Mammary epithelial cell (primary cell): ENCODE measurements at regions of chr7 and their contacts with region 1.

Region 1: GRCh38 chr7:121961089-121961867 is 88.3 kb downstream of the PTPRZ1 start:
- DNase-seq: peak; percentile 93
- H3K4me3 ChIP-seq: no peak overlapping the region
- H3K27ac ChIP-seq: peak overlapping the region; percentile 99
- H3K4me1 ChIP-seq: peaks cover 10% of the 10 kb centered on the region
- H3K27me3 ChIP-seq: no peaks in the 10 kb centered on the region
- CTCF ChIP-seq: peak; percentile 25 to 47

Region 2: DNA sequence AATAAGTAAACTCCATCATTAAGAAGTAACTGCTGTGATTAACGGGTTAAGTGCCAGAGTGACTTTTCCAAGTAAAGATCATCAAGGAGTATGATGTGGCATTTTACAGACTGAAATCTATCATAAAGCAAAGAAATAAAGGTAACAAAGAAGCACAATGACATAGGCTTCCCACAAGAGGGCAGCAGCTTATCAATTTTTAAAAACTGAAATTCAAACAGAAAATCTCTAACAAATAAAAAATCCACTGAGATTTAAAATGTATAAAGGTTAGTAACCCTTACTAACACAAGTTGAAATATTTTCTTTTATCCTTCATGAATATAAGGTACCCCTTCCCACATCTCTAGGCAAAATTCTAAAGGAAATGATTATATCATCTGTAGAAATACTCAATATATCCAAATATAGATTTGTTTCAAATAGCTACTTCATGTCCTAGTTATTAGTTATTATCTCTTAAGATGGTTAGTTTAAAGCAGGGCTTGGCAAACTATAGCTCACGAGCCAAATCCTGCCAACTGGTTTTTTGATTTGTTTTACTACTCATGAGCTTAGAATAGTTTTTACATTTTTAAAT is 594.3 kb before region 1 on chr7:
- CTCF ChIA-PET with region 1: no interaction called
- dilution Hi-C with region 1: no loop called
- in situ Hi-C with region 1: no loop called
- intact Hi-C with region 1: loop called (anchors 1 kb)
- DNase-seq: no peak
- H3K4me3 ChIP-seq: no peak overlapping the region
- H3K27ac ChIP-seq: no peak overlapping the region
- H3K4me1 ChIP-seq: peaks cover 4% of the 10 kb centered on the region
- H3K27me3 ChIP-seq: no peaks in the 10 kb centered on the region
- CTCF ChIP-seq: peak; percentile 69

Region 3: DNA sequence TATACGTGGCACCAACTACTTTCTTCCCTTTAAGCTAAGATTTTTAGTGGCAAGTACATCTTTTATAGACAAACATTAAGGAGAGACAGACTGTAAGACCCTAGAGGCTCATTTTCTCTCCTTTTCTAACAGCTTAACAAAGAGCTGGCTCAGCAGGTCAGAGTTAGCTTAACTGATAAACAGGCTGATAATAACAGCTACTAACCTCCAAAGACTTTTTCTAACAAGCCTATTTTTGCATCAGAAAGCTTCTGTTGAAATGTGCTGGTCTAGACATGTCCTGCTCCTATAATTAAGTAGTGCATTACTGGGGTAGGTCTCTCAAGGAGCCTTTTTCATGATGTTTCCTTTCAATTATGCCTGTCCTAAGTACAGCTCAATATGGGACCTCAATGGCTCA is 326.9 kb before region 1 on chr7:
- CTCF ChIA-PET with region 1: no interaction called
- dilution Hi-C with region 1: no loop called
- in situ Hi-C with region 1: no loop called
- intact Hi-C with region 1: loop called (anchors 10 kb)
- DNase-seq: peak; percentile 4
- H3K4me3 ChIP-seq: no peak overlapping the region
- H3K27ac ChIP-seq: no peak overlapping the region
- H3K4me1 ChIP-seq: no peaks in the 10 kb centered on the region
- H3K27me3 ChIP-seq: no peaks in the 10 kb centered on the region
- CTCF ChIP-seq: no peak

Region 4: GRCh38 chr7:121752706-121753105 is 208.6 kb before region 1 on chr7:
- CTCF ChIA-PET with region 1: no interaction called
- dilution Hi-C with region 1: no loop called
- in situ Hi-C with region 1: no loop called
- intact Hi-C with region 1: loop called (anchors 1 kb)
- DNase-seq: no peak
- H3K4me3 ChIP-seq: no peak overlapping the region
- H3K27ac ChIP-seq: no peak overlapping the region
- H3K4me1 ChIP-seq: peaks cover 3% of the 10 kb centered on the region
- H3K27me3 ChIP-seq: no peaks in the 10 kb centered on the region
- CTCF ChIP-seq: peak in 1 of 2 donors; percentile 49

Region 5: GRCh38 chr7:121824276-121824675 is 137.0 kb before region 1 on chr7:
- CTCF ChIA-PET with region 1: no interaction called
- dilution Hi-C with region 1: no loop called
- in situ Hi-C with region 1: no loop called
- intact Hi-C with region 1: no loop called
- DNase-seq: peak; percentile 17
- H3K4me3 ChIP-seq: no peak overlapping the region
- H3K27ac ChIP-seq: no peak overlapping the region
- H3K4me1 ChIP-seq: no peaks in the 10 kb centered on the region
- H3K27me3 ChIP-seq: no peaks in the 10 kb centered on the region
- CTCF ChIP-seq: no peak

Region 6: DNA sequence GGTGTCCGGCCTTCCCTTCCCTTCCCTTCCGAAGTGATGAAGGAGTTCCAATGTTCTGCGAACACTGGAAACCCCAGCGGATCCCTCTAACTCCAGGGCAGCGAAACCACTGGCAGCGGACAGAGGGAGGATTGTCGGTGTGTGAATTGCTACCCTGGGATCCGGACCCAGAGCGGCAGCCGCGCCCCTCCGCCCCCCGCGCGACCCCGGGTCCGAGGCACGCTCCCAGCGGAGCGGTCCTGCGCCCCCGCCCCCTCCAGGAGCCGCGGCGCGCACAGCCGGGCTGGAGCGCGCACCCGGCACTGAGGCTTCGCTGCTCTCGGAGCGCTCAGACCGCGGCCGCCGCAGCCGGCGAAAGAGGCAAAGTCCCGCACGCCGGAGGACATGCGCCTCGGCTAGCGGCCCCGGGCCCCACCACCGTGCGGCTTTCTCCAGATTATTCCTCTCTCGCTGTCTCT is 88.4 kb before region 1 on chr7 and contains the start of gene PTPRZ1:
- CTCF ChIA-PET with region 1: no interaction called
- dilution Hi-C with region 1: no loop called
- in situ Hi-C with region 1: no loop called
- intact Hi-C with region 1: loop called (anchors 1 kb)
- DNase-seq: no peak
- H3K4me3 ChIP-seq: peak within 1 kb of the TSS; percentile 86 to 98 (median 89)
- H3K27ac ChIP-seq: peak within 1 kb of the TSS; percentile 49
- H3K4me1 ChIP-seq: peaks cover 8% of the 10 kb centered on the region
- H3K27me3 ChIP-seq: no peaks in the 10 kb centered on the region
- CTCF ChIP-seq: no peak
- total RNA-seq, gene PTPRZ1: 6.2 to 46.1 TPM

Region 7: GRCh38 chr7:121945066-121945848 is 16.0 kb before region 1 on chr7:
- CTCF ChIA-PET with region 1: interaction called, 4 read pairs
- dilution Hi-C with region 1: no loop called
- in situ Hi-C with region 1: no loop called
- intact Hi-C with region 1: loop called (anchors 1 kb)
- DNase-seq: peak; percentile 80
- H3K4me3 ChIP-seq: no peak overlapping the region
- H3K27ac ChIP-seq: peak overlapping the region; percentile 69
- H3K4me1 ChIP-seq: peaks cover 25% of the 10 kb centered on the region
- H3K27me3 ChIP-seq: no peaks in the 10 kb centered on the region
- CTCF ChIP-seq: no peak

Region 8: DNA sequence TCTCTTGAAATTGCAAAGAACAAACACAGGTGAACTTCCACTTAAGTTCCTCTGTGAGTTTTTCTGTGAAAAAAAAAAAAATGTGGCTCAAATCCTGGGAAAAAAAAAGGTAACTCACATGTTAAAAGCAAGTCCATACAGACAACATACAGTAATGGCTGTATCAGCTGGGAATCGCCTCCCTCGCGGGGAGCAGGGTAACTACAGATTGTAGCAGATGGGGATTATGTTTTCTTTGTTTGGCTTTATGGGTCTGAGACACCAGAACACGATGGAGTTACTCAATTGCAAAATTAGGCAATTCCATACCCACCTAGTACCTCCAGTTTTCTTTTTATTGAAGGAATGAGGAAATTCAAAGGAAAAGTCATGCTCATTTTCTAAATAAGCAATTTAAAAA is 301.0 kb after region 1 on chr7:
- CTCF ChIA-PET with region 1: no interaction called
- dilution Hi-C with region 1: no loop called
- in situ Hi-C with region 1: no loop called
- intact Hi-C with region 1: no loop called
- DNase-seq: no peak
- H3K4me3 ChIP-seq: no peak overlapping the region
- H3K27ac ChIP-seq: no peak overlapping the region
- H3K4me1 ChIP-seq: no peaks in the 10 kb centered on the region
- H3K27me3 ChIP-seq: no peaks in the 10 kb centered on the region
- CTCF ChIP-seq: no peak